CD4-positive, alpha-beta memory T cell (primary cell): ENCODE measurements at regions of chr12 and their contacts with region 1.

Region 1: DNA sequence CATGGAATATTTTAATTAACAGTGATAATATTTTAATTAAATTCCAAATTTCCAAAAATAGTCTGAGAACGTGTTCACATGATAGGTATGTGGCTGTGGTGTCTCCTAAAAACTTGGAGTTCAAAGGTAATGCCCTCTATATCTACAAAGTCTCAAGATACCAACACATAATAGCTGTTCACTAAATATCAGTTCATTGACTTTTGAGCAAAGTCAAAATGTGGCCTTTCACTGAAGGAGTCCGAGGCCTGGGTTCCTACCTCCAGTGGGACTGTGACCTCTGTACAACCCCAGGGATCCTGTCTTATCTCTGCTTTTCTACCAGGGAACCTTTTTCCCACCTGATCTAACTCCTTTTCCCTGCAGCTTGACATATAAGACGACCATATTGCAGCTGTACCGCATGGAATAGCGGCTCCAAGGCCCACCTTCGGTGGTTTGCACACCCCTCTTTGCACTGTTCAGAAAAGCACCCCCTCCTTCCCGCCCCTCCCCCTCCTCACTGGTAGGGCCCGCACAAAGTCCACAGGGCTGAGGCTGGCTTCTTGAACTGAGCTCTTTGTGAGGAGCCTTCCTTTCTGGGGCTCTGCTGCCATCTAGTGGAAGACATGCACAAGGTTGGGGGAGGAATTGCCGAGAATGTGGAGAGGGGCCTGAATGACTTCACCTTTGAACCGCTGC is 3.1 kb downstream of the CCND2 start:
- DNase-seq: peak; percentile 85 to 92 (median 88)
- H3K4me3 ChIP-seq: peak overlapping the region; percentile 84 to 96
- H3K4me3 Mint-ChIP-seq: peak overlapping the region; percentile 91 to 99 (median 96)
- H3K27ac ChIP-seq: peak overlapping the region; percentile 91
- H3K27ac Mint-ChIP-seq: peak overlapping the region; percentile 91 to 100 (median 98)
- H3K4me1 ChIP-seq: peaks cover 68% of the 10 kb centered on the region
- H3K4me1 Mint-ChIP-seq: peaks cover 34 to 88% (median 59%) of the 10 kb centered on the region in 4 donors
- H3K27me3 ChIP-seq: no peaks in the 10 kb centered on the region
- H3K27me3 Mint-ChIP-seq: no peaks in the 10 kb centered on the region

Region 2: GRCh38 chr12:3752741-3753486 is 523.8 kb before region 1 on chr12 and contains the start of gene CRACR2A:
- CTCF ChIA-PET with region 1: no interaction called
- POLR2A ChIA-PET with region 1: interaction called, 5 read pairs
- intact Hi-C with region 1: loop called (anchors 5 kb)
- DNase-seq: peak; percentile 79 to 85 (median 83)
- H3K4me3 ChIP-seq: peak within 1 kb of the TSS; percentile 82 to 89
- H3K4me3 Mint-ChIP-seq: peak within 1 kb of the TSS; percentile 87 to 95 (median 92)
- H3K27ac ChIP-seq: peak within 1 kb of the TSS; percentile 89
- H3K27ac Mint-ChIP-seq: peak within 1 kb of the TSS; percentile 94 to 99 (median 98)
- H3K4me1 ChIP-seq: peaks cover 61% of the 10 kb centered on the region
- H3K4me1 Mint-ChIP-seq: peaks cover 56 to 66% (median 60%) of the 10 kb centered on the region in 4 donors
- H3K27me3 ChIP-seq: no peaks in the 10 kb centered on the region
- H3K27me3 Mint-ChIP-seq: no peaks in the 10 kb centered on the region
- total RNA-seq, gene CRACR2A: 34.4 to 37.6 TPM

Region 3: DNA sequence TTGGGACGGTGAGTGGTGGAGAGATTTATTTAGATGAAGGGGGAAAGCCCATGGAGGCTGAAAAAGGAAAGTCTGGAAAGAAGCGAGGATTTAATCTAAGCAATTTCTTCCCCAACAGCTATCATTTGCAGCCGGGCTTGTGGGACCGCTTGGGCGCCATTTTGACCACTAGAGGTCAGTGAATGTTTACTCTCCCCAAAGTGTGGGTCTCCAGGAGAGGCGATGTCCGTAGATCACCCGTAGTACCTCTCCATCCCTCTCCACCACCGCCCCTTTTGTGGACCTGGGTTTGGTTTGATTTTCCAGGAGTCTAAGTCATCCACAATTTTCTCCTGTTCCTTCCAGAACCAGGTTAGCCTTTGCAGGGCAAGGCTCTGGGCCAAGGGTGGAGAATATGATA is 312.2 kb before region 1 on chr12:
- CTCF ChIA-PET with region 1: interaction called, 76 read pairs
- POLR2A ChIA-PET with region 1: interaction called, 48 read pairs
- intact Hi-C with region 1: loop called (anchors 1 kb)
- DNase-seq: no peak
- H3K4me3 ChIP-seq: no peak overlapping the region
- H3K4me3 Mint-ChIP-seq: no peak overlapping the region
- H3K27ac ChIP-seq: no peak overlapping the region
- H3K27ac Mint-ChIP-seq: peak overlapping the region in 4 of 7 donors; percentile 8 to 83 (median 48)
- H3K4me1 ChIP-seq: peaks cover 20% of the 10 kb centered on the region
- H3K4me1 Mint-ChIP-seq: peaks cover 18 to 37% (median 26%) of the 10 kb centered on the region in 4 donors
- H3K27me3 ChIP-seq: no peaks in the 10 kb centered on the region
- H3K27me3 Mint-ChIP-seq: no peaks in the 10 kb centered on the region

Region 4: DNA sequence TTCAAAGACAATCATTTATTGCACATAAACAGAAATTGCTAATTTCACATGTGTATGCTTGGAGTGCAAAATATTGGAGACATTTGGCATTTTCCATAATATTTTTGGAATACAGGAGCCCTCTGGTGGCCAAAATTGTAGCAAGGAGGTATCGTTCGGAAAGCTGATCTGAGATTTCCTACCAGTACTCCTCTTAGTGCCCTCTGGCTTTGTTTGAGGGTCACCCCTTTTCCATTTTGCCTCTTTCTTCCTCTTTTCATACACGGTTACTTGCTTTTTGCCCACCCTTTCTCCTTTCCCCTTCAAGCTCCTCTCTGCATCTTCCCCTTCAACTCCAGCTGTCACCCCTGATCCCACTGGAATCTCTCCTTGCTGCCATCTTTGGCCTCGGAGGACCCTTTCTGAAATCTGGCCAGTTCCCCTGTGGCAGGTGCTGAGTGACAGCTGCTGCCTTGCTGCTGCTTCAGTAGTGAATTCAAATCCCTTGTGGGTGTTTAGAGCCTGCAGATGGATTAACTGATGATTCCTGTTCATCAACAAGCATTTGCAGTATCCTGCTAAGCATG is 238.8 kb before region 1 on chr12:
- CTCF ChIA-PET with region 1: interaction called, 70 read pairs
- POLR2A ChIA-PET with region 1: interaction called, 8 read pairs
- intact Hi-C with region 1: loop called (anchors 1 kb)
- DNase-seq: peak in 4 of 5 donors; percentile 4 to 20 (median 8)
- H3K4me3 ChIP-seq: no peak overlapping the region
- H3K4me3 Mint-ChIP-seq: no peak overlapping the region
- H3K27ac ChIP-seq: no peak overlapping the region
- H3K27ac Mint-ChIP-seq: peak overlapping the region in 1 of 7 donors; percentile 39
- H3K4me1 ChIP-seq: no peaks in the 10 kb centered on the region
- H3K4me1 Mint-ChIP-seq: peaks cover 0 to 6% (median under 1%) of the 10 kb centered on the region in 4 donors
- H3K27me3 ChIP-seq: no peaks in the 10 kb centered on the region
- H3K27me3 Mint-ChIP-seq: no peaks in the 10 kb centered on the region

Region 5: GRCh38 chr12:4164559-4165558 is 111.8 kb before region 1 on chr12:
- CTCF ChIA-PET with region 1: interaction called, 19 read pairs
- POLR2A ChIA-PET with region 1: interaction called, 24 read pairs
- intact Hi-C with region 1: no loop called
- DNase-seq: peak; percentile 40 to 60 (median 59)
- H3K4me3 ChIP-seq: peak overlapping the region; percentile 9 to 75
- H3K4me3 Mint-ChIP-seq: peak overlapping the region; percentile 83 to 94 (median 90)
- H3K27ac ChIP-seq: peak overlapping the region; percentile 50
- H3K27ac Mint-ChIP-seq: peak overlapping the region; percentile 28 to 96 (median 91)
- H3K4me1 ChIP-seq: peaks cover 12% of the 10 kb centered on the region
- H3K4me1 Mint-ChIP-seq: peaks cover 13 to 29% (median 22%) of the 10 kb centered on the region in 4 donors
- H3K27me3 ChIP-seq: no peaks in the 10 kb centered on the region
- H3K27me3 Mint-ChIP-seq: no peaks in the 10 kb centered on the region

Region 6: DNA sequence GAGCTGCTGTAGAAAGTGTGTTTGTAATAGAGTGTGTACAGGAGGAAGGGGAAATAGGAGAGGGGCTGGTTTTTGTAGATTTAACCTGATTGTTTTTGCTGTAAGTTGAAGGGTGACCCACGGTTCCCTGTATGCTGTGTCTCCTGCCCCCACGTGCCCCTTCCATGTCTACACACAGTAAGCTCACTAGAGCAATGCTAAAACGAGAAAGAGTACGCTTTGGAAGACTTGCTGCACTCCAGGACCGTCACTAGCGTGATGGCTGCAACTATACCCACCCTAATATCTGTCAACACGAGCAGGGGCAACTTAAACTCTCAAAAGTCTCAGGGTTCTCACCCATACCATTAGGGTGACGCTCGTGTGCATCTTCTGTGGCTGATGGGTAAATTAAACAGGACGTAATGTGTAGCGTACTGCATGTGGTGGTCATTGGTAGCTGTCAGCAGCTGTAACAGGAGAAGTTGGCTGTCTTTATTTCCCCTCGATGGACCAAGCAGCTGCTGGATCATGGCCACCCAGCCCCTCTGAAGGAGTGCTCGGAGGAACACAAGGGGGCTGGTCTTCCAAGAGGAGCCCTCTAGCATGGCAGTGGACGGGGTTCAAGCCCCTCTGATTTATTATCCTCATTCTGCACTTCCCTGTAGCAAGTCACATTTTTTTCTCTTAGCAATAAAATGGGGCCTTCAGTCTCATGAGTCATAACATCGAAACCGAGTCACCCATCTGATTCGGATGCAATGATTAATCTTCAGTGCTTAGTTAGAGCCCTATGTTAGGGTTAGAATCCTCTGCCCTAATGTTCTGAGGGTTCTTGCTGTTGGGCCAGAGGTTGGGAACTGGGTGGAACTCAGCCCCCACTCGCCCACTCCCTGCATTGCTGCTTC is 10.9 kb after region 1 on chr12:
- CTCF ChIA-PET with region 1: interaction called, 76 read pairs
- POLR2A ChIA-PET with region 1: interaction called, 26 read pairs
- intact Hi-C with region 1: no loop called
- DNase-seq: no peak
- H3K4me3 ChIP-seq: no peak overlapping the region
- H3K4me3 Mint-ChIP-seq: peak overlapping the region in 6 of 8 donors; percentile 5 to 44 (median 30)
- H3K27ac ChIP-seq: peak overlapping the region; percentile 26
- H3K27ac Mint-ChIP-seq: peak overlapping the region; percentile 44 to 97 (median 89)
- H3K4me1 ChIP-seq: peaks cover 97% of the 10 kb centered on the region
- H3K4me1 Mint-ChIP-seq: peaks cover 59 to 100% (median 84%) of the 10 kb centered on the region in 4 donors
- H3K27me3 ChIP-seq: no peaks in the 10 kb centered on the region
- H3K27me3 Mint-ChIP-seq: no peaks in the 10 kb centered on the region

Region 7: GRCh38 chr12:4307593-4308333 is 31.1 kb after region 1 on chr12:
- CTCF ChIA-PET with region 1: no interaction called
- POLR2A ChIA-PET with region 1: no interaction called
- intact Hi-C with region 1: no loop called
- DNase-seq: no peak
- H3K4me3 ChIP-seq: no peak overlapping the region
- H3K4me3 Mint-ChIP-seq: no peak overlapping the region
- H3K27ac ChIP-seq: no peak overlapping the region
- H3K27ac Mint-ChIP-seq: peak overlapping the region in 3 of 7 donors; percentile 29 to 79 (median 46)
- H3K4me1 ChIP-seq: no peaks in the 10 kb centered on the region
- H3K4me1 Mint-ChIP-seq: peaks cover 0 to 5% (median 1%) of the 10 kb centered on the region in 4 donors
- H3K27me3 ChIP-seq: no peaks in the 10 kb centered on the region
- H3K27me3 Mint-ChIP-seq: no peaks in the 10 kb centered on the region

Region 8: GRCh38 chr12:4483885-4484823 is 207.5 kb after region 1 on chr12:
- CTCF ChIA-PET with region 1: no interaction called
- POLR2A ChIA-PET with region 1: no interaction called
- intact Hi-C with region 1: no loop called
- DNase-seq: no peak
- H3K4me3 ChIP-seq: no peak overlapping the region
- H3K4me3 Mint-ChIP-seq: no peak overlapping the region
- H3K27ac ChIP-seq: no peak overlapping the region
- H3K27ac Mint-ChIP-seq: peak overlapping the region in 3 of 7 donors; percentile 26 to 65 (median 38)
- H3K4me1 ChIP-seq: no peaks in the 10 kb centered on the region
- H3K4me1 Mint-ChIP-seq: peaks cover 0 to 1% (median 0%) of the 10 kb centered on the region in 4 donors
- H3K27me3 ChIP-seq: no peaks in the 10 kb centered on the region
- H3K27me3 Mint-ChIP-seq: peaks cover 0 to 3% of the 10 kb centered on the region in 2 donors

Region 9: GRCh38 chr12:5258498-5258897 is 981.8 kb after region 1 on chr12:
- CTCF ChIA-PET with region 1: no interaction called
- POLR2A ChIA-PET with region 1: no interaction called
- intact Hi-C with region 1: no loop called
- DNase-seq: no peak
- H3K4me3 ChIP-seq: no peak overlapping the region
- H3K4me3 Mint-ChIP-seq: no peak overlapping the region
- H3K27ac ChIP-seq: no peak overlapping the region
- H3K27ac Mint-ChIP-seq: no peak overlapping the region
- H3K4me1 ChIP-seq: no peaks in the 10 kb centered on the region
- H3K4me1 Mint-ChIP-seq: no peaks in the 10 kb centered on the region
- H3K27me3 ChIP-seq: no peaks in the 10 kb centered on the region
- H3K27me3 Mint-ChIP-seq: peaks cover 6 to 7% of the 10 kb centered on the region in 2 donors